ENCODE measurements at regions of chr7 and their contacts with region 1.

Region 1: GRCh38 chr7:118259115-118259514 is 34.6 kb downstream of the ANKRD7 start:
- DNase-seq: no peak
- ATAC-seq: no peak

Region 2: GRCh38 chr7:118224521-118224920 is 34.6 kb before region 1 on chr7 and contains the start of gene ANKRD7:
- intact Hi-C with region 1: no loop called
- DNase-seq: no peak
- ATAC-seq: no peak
- total RNA-seq, gene ANKRD7: 1.0 TPM

Region 3: DNA sequence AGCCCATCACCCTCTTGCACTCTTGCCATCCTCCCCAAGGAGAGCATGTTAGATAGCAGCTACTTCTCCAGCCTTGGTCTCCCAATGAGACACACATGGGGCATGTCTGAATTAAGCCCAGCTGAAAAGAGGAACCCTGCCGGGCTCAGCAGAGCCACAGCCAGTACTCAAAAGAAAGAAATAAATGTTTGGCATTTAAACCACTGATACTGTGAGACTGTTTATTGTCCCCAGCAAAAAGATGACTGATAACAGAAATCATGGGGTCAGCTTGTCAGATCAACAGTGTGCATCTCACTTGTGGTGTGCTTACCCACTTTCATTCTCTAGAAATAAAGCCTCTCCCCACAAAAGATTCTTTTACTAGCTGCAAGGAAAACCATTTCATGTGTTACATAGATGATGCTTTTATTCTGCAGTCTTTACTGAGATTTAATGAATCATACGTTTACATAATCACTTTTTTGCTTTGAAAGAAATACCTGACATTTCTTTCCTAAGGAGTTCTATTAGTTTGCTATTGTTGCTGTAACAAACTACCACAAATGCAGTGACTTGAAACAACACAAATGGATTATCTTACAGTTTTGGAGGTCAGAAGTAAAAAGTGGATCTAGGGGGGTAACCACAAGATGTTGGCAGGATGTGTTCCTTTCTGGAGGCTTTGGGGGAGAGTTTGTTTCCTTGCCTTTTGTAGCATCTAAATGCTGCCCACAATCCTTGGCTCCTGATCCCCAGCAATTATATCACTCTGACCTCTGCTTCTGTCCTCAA is 13.7 kb before region 1 on chr7:
- intact Hi-C with region 1: loop called (anchors 1 kb)
- DNase-seq: no peak
- ATAC-seq: no peak

Measured in sciatic nerve (tissue), 2 donors.